ENCODE measurements at regions of chr5 and their contacts with region 1.

Region 1: DNA sequence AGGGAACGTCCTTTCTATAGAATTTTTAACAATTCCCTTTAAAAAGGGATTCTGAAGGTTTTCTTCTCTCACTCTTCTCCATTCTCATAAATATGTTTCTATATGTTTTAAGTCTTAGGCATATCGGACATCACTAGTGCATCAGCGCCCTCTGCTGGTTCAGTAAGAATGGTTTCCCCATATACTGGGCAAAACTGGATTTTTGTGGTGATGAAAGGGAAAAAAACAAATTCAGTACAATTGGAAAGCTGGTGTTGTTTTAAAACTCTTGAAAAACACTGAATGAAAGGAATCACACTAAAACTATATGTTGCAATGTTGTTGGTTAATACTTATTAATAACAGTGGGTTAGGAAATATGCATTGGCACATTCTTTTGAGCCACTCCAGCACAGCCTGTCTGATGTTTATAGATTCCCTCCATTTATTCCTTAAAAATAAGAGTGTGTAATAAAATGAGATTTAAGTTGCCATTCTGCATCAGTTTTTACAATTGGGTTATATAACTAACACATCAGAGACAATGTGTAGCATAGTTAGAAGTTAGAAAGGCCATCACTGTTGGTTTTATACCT is 15.8 kb downstream of the CWC27 start:
- DNase-seq: peak; percentile 53 to 90 (median 78)
- H3K4me3 ChIP-seq: no peak overlapping the region
- H3K27ac ChIP-seq: no peak overlapping the region
- H3K4me1 ChIP-seq: peaks cover 3 to 4% of the 10 kb centered on the region in 2 donors
- H3K27me3 ChIP-seq: no peaks in the 10 kb centered on the region
- CTCF ChIP-seq: peak; percentile 76 to 88 (median 84)
- POLR2A ChIP-seq: no peak

Region 2: GRCh38 chr5:64229163-64229774 is 555.3 kb before region 1 on chr5:
- intact Hi-C with region 1: loop called in 1 of 2 experiments (anchors 10 kb)
- DNase-seq: no peak
- H3K4me3 ChIP-seq: no peak overlapping the region
- H3K27ac ChIP-seq: no peak overlapping the region
- H3K4me1 ChIP-seq: peaks cover 0 to 5% of the 10 kb centered on the region in 2 donors
- H3K27me3 ChIP-seq: no peaks in the 10 kb centered on the region
- CTCF ChIP-seq: peak; percentile 55 to 80 (median 72)
- POLR2A ChIP-seq: no peak

Region 3: DNA sequence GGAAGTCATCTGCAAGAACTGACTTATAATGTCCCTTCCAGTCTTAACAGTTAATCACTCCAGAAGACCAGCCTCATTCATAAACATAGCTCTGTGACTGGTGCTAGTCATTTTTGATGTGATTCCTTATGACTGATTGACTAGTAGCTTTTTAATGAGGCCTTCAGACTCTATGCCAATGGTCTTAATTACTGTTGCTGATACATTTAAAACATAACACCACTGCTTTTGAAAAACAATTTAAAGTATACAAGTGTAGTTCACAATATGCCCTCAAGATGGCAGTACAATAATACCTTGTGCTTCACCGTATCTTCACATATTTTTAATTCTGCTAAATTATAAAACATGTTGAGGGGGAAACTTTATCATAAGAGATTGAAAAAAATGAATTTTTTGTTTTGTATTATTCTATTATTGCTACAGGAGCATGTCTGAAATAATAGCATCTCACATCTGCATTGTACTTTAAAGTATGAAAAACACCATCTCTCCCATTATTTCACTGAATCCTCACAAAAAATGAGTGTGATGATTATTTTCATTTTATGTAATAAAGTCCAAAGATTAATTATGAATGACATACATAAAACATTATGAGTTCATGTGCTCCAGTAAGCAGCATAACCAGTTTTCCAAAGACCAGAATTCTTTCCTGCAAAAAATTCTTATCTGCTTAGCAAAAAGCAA is 149.4 kb before region 1 on chr5:
- intact Hi-C with region 1: loop called (anchors 5 kb)
- DNase-seq: no peak
- H3K4me3 ChIP-seq: no peak overlapping the region
- H3K27ac ChIP-seq: no peak overlapping the region
- H3K4me1 ChIP-seq: no peaks in the 10 kb centered on the region
- H3K27me3 ChIP-seq: no peaks in the 10 kb centered on the region
- CTCF ChIP-seq: peak; percentile 68 to 91 (median 78)
- POLR2A ChIP-seq: no peak

Measured in adrenal gland (tissue), 19 donors.